Sigmoid colon (tissue), 7 donors: ENCODE measurements at regions of chr4 and their contacts with region 1.

Region 1: DNA sequence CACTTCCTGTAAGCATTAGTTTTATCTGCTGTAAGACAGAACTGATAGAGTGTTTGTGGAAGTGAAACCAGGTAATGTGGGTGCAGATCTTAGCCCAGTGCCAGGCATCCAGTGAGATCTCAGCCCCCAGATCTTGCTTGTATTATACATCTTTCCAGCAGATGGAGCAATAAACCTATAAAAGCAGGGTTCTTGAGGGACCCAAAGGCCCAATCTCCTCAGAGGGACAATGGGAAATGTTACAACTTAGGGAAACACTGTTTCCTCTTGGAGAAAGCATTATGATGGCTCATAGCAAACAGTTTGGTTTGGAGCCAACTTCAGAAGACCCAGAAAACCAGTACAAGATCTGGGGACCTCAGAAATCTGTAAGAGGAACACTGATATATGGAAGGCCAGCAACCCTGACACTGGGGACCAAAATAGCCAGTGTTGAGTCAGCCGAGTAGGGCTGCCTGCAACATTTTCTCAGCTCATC is 206.3 kb downstream of the SLC7A11 start:
- DNase-seq: no peak
- H3K4me3 ChIP-seq: no peak overlapping the region
- H3K27ac ChIP-seq: no peak overlapping the region
- H3K4me1 ChIP-seq: no peaks in the 10 kb centered on the region
- H3K27me3 ChIP-seq: no peaks in the 10 kb centered on the region
- CTCF ChIP-seq: peak in 3 of 4 experiments; percentile 41 to 57 (median 41)
- EP300 ChIP-seq: no peak
- POLR2A ChIP-seq: no peak

Region 2: DNA sequence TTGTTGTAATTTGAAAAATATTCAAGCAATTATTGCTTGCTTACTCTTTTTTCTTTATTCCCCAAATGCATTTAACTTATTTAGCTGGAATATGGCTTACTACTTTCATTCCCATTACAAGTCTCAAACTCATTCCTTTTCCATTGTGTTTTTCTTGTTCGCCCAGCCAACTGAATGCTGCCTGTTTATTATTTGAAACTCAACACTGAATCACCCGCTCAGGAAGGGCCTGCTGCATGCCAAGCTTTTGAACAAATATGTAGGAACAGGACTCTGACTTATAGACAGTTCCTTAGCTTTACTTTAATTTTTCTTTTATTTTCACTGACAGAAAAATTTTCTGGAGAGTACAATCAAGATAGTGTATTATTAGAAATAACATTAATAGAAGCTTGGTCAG is 516.4 kb before region 1 on chr4:
- intact Hi-C with region 1: no loop called
- DNase-seq: no peak
- H3K4me3 ChIP-seq: no peak overlapping the region
- H3K27ac ChIP-seq: peak overlapping the region; percentile 10 to 85 (median 54)
- H3K4me1 ChIP-seq: peaks cover 0 to 75% (median 40%) of the 10 kb centered on the region in 4 donors
- H3K27me3 ChIP-seq: no peaks in the 10 kb centered on the region
- CTCF ChIP-seq: no peak
- EP300 ChIP-seq: no peak
- POLR2A ChIP-seq: no peak

Region 3: GRCh38 chr4:138090150-138090917 is 54.5 kb after region 1 on chr4:
- intact Hi-C with region 1: loop called (anchors 2 kb)
- DNase-seq: peak; percentile 70
- H3K4me3 ChIP-seq: peak overlapping the region in 3 of 4 donors; percentile 25 to 38 (median 28)
- H3K27ac ChIP-seq: no peak overlapping the region
- H3K4me1 ChIP-seq: peaks cover 0 to 22% (median 15%) of the 10 kb centered on the region in 4 donors
- H3K27me3 ChIP-seq: no peaks in the 10 kb centered on the region
- CTCF ChIP-seq: peak; percentile 53 to 79 (median 66)
- EP300 ChIP-seq: no peak
- POLR2A ChIP-seq: no peak

Region 4: GRCh38 chr4:138182838-138183426 is 147.1 kb after region 1 on chr4:
- intact Hi-C with region 1: loop called (anchors 2 kb)
- DNase-seq: no peak
- H3K4me3 ChIP-seq: no peak overlapping the region
- H3K27ac ChIP-seq: no peak overlapping the region
- H3K4me1 ChIP-seq: no peaks in the 10 kb centered on the region
- H3K27me3 ChIP-seq: no peaks in the 10 kb centered on the region
- CTCF ChIP-seq: peak; percentile 8 to 58 (median 34)
- EP300 ChIP-seq: no peak
- POLR2A ChIP-seq: no peak

Region 5: GRCh38 chr4:138870737-138871554 is 835.1 kb after region 1 on chr4:
- intact Hi-C with region 1: loop called (anchors 5 kb)
- DNase-seq: peak; percentile 71
- H3K4me3 ChIP-seq: no peak overlapping the region
- H3K27ac ChIP-seq: no peak overlapping the region
- H3K4me1 ChIP-seq: peaks cover 0 to 14% (median 12%) of the 10 kb centered on the region in 4 donors
- H3K27me3 ChIP-seq: no peaks in the 10 kb centered on the region
- CTCF ChIP-seq: peak; percentile 61 to 81 (median 78)
- EP300 ChIP-seq: no peak
- POLR2A ChIP-seq: no peak

Region 6: DNA sequence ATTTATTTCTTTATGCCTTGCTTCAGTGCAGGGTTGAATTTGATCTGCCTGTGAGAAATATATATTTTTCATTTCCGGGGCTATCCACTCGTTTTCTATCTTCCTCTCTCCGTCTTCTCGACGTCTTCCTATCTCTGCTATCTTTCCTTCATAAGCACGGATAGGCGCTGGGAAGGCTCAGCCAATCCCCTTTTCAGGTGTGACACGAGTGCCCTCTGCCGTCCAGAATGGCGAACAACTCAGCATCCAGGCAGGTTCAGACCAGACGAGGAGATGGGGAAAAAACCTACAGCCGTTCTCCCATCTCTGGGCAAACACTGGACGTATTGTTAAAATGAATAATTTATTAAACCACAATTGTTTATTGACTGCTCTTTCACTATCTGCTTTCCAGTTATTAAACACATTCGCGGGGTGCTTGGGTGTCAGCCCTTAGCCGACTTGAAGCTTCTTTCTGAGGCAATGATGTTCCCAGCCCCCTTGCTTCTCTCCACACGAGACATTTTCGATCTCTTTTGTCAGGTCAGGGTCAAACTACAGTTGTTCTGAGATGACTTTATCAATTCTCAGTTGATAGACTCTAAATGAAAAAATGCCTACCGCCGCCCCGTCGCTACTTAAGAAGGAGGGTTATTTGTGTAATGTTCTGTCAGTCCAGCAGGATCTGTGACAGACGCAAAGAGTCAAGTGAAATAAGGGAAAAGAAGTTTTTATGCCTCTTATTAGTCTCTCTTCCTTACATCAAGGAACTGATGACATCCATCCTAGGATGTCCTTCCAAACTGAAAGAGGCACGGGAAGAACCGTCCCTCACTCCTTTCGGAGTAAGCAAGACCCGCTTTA is 883.5 kb after region 1 on chr4:
- intact Hi-C with region 1: loop called (anchors 10 kb)
- DNase-seq: peak; percentile 73
- H3K4me3 ChIP-seq: no peak overlapping the region
- H3K27ac ChIP-seq: no peak overlapping the region
- H3K4me1 ChIP-seq: peaks cover 0 to 8% (median 0%) of the 10 kb centered on the region in 4 donors
- H3K27me3 ChIP-seq: no peaks in the 10 kb centered on the region
- CTCF ChIP-seq: peak; percentile 25 to 78 (median 50)
- EP300 ChIP-seq: no peak
- POLR2A ChIP-seq: no peak